MCF 10A (cell line): ENCODE measurements at regions of chr1 and their contacts with region 1.

Region 1: GRCh38 chr1:65174585-65174984 is 26.6 kb downstream of the AK4 start:
- DNase-seq: peak; percentile 98
- H3K4me3 Mint-ChIP-seq: peak overlapping the region; percentile 52
- H3K27ac Mint-ChIP-seq: peak overlapping the region; percentile 90
- H3K4me1 Mint-ChIP-seq: peaks cover 67% of the 10 kb centered on the region
- H3K27me3 Mint-ChIP-seq: no peaks in the 10 kb centered on the region
- CTCF ChIP-seq: no peak

Region 2: DNA sequence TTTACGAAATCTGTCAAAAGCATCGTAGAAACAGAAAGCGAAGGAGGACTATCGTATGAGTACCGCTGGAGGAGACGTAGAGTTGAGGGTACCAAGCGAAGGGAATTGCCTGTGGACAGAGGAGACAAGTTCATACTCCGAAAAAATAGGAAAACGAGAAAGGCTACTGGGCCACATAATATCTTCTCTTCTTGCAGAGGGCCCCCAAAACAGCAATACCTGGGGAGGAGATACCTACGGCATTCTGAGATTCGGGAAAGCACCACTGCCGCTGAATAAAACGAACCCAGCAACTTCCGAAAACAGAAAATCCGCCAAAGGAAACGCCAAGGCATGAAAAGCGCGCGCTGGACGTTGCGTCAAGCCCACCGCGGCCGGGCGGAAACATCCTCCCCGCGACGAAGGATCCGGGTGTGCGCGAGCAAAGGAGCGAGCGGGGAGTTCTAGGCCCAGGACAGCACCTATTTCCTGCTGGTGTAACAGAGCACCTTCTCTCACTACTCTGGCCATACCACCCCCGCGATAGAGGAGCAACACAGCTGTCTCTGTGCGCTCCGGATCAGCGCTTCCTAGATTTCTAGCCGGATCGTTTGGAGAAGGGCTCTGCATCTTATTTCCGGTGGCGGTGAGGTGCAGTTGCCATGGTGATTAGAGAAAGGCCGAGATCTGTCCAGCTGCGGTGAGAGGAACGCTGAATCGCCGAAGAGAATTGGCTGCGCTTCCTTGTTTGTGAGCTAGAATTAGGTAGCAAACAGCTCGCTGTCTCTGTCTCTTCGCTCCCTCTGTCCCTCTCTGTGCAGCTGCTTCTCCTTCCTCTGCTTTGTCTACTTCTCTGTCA is 1651.5 kb before region 1 on chr1 and contains the starts of genes EFCAB7 and ITGB3BP:
- CTCF ChIA-PET with region 1: no interaction called
- POLR2A ChIA-PET with region 1: no interaction called
- intact Hi-C with region 1: loop called (anchors 10 kb)
- DNase-seq: peak; percentile 95
- H3K4me3 Mint-ChIP-seq: peak within 1 kb of the TSS; percentile 93
- H3K27ac Mint-ChIP-seq: peak within 1 kb of the TSS; percentile 94
- H3K4me1 Mint-ChIP-seq: peaks cover 26% of the 10 kb centered on the region
- H3K27me3 Mint-ChIP-seq: no peaks in the 10 kb centered on the region
- CTCF ChIP-seq: no peak
- total RNA-seq, gene EFCAB7: 7.6 and 7.9 TPM in 2 replicates
- total RNA-seq, gene ITGB3BP: 31.4 and 31.8 TPM in 2 replicates

Region 3: GRCh38 chr1:65001231-65001792 is 173.3 kb before region 1 on chr1:
- CTCF ChIA-PET with region 1: no interaction called
- POLR2A ChIA-PET with region 1: no interaction called
- intact Hi-C with region 1: no loop called
- DNase-seq: no peak
- H3K4me3 Mint-ChIP-seq: peak overlapping the region; percentile 72
- H3K27ac Mint-ChIP-seq: no peak overlapping the region
- H3K4me1 Mint-ChIP-seq: peaks cover 18% of the 10 kb centered on the region
- H3K27me3 Mint-ChIP-seq: no peaks in the 10 kb centered on the region
- CTCF ChIP-seq: no peak

Region 4: DNA sequence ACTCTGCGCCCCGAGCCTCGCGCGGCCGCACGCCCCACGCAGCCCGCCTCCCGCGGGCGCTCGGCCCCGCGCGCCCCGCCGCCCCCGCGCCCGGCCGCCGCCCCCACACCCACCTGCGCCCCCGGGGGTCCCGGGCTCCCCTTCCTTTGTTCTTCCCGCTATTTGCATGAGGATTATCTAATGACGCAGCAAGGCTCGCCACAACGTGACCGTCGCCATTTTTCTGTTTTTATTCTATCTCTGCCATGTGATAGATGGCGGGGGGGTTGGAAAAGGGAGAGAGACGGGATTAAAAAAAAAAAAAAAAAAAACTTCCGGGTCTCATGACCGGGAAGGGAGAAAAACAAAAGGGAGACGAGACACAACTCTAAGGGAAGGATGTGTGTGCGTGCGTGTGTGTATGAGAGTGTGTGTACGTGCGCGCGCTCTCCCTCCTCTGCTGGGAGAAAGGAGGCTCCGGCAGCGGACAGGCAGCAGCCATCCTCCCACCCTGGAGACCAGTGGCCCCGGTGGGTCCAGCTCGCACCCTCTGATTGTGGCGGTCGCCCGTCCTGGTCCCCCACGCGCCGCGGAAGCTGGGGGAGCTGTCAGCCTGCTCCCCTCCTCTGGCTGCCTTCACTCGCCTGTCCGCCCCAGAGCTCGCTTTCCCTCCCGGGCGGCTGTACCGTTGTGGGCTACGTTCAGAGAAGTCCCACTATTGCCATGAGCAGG is 106.9 kb before region 1 on chr1:
- CTCF ChIA-PET with region 1: interaction called, 4 read pairs
- POLR2A ChIA-PET with region 1: interaction called, 10 read pairs
- intact Hi-C with region 1: no loop called
- DNase-seq: peak; percentile 70
- H3K4me3 Mint-ChIP-seq: peak overlapping the region; percentile 77
- H3K27ac Mint-ChIP-seq: peak overlapping the region; percentile 92
- H3K4me1 Mint-ChIP-seq: peaks cover 13% of the 10 kb centered on the region
- H3K27me3 Mint-ChIP-seq: no peaks in the 10 kb centered on the region
- CTCF ChIP-seq: no peak

Region 5: GRCh38 chr1:65141394-65141793 is 33.2 kb before region 1 on chr1:
- CTCF ChIA-PET with region 1: no interaction called
- POLR2A ChIA-PET with region 1: interaction called, 3 read pairs
- intact Hi-C with region 1: loop called (anchors 2 kb)
- DNase-seq: peak; percentile 46
- H3K4me3 Mint-ChIP-seq: no peak overlapping the region
- H3K27ac Mint-ChIP-seq: peak overlapping the region; percentile 50
- H3K4me1 Mint-ChIP-seq: peaks cover 7% of the 10 kb centered on the region
- H3K27me3 Mint-ChIP-seq: no peaks in the 10 kb centered on the region
- CTCF ChIP-seq: no peak

Region 6: DNA sequence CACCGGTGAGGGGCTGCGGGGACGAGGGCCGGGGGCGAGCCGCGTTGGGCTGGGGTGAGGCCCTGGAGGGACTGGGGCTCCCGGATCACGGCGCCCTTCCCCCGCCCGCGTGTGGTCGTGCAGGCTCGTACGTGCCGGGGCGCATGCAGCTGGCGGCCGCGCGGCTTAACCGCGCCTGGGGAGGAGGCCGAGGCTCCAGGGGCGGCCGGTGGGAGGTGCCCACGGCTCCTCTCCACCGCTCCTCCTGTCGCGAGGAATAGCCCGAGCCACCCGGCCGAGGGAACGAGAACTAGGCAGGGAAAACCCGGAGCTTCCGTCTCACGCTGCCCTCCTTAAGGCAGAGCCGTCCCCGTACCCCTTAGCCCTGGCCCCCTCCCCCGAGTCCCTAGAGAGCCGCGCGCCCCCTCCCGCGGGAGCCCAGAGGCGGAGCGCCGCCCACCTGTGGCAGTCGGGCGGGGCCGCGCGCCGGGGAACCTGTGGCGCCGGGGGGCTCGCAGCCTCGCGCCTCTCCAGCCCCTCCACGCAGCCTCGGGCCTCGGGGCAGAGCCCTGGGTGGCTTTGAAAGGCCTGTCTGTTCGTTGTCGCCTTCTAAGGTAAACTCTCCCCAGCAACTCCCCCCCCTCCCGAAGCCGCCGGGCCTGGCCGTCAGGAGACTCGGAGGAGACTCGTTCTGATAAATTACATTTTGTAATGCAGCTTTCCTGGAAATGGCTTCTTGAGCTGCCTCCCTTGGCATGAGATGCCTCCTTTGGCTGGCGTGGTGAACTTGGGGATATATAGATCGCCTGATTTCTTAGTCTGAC is 25.8 kb before region 1 on chr1:
- CTCF ChIA-PET with region 1: interaction called, 3 read pairs
- POLR2A ChIA-PET with region 1: interaction called, 29 read pairs
- intact Hi-C with region 1: no loop called
- DNase-seq: peak; percentile 58
- H3K4me3 Mint-ChIP-seq: peak overlapping the region; percentile 79
- H3K27ac Mint-ChIP-seq: peak overlapping the region; percentile 6
- H3K4me1 Mint-ChIP-seq: peaks cover 23% of the 10 kb centered on the region
- H3K27me3 Mint-ChIP-seq: no peaks in the 10 kb centered on the region
- CTCF ChIP-seq: no peak

Region 7: GRCh38 chr1:65355031-65355712 is 180.6 kb after region 1 on chr1:
- CTCF ChIA-PET with region 1: no interaction called
- POLR2A ChIA-PET with region 1: no interaction called
- intact Hi-C with region 1: no loop called
- DNase-seq: no peak
- H3K4me3 Mint-ChIP-seq: no peak overlapping the region
- H3K27ac Mint-ChIP-seq: no peak overlapping the region
- H3K4me1 Mint-ChIP-seq: no peaks in the 10 kb centered on the region
- H3K27me3 Mint-ChIP-seq: no peaks in the 10 kb centered on the region
- CTCF ChIP-seq: no peak